ENCODE measurements at regions of chr2 and their contacts with region 1.

Region 1: GRCh38 chr2:29196792-29197788 is 81.9 kb downstream of the CLIP4 start:
- DNase-seq: peak; percentile 56 to 74 (median 67)
- ATAC-seq: peak; percentile 85 to 93 (median 92)
- H3K4me3 ChIP-seq: no peak overlapping the region
- H3K27ac ChIP-seq: no peak overlapping the region
- H3K4me1 ChIP-seq: no peaks in the 10 kb centered on the region
- H3K27me3 ChIP-seq: no peaks in the 10 kb centered on the region
- CTCF ChIP-seq: peak; percentile 78 to 85 (median 81)
- POLR2A ChIP-seq: no peak

Region 2: DNA sequence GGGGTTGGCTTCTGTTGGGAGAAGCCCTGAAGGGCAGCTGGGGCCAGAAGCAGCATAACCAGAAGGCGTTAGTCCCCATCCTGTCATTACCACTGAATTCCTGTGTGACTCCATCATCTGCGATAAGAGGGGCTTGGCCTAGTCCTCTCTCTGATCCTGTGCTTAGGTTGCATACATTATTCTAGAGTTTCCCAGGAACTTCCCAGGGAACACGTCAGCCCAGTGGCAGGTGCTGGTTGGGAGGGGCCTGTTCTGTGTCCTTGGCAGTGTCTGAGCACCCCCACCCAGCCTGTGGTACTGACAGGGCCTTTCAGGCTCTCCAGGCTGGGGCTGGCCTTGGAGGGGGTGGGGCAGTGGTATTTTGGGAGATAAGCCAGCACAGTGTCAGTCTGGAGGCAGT is 220.5 kb before region 1 on chr2:
- intact Hi-C with region 1: loop called in 1 of 2 experiments (anchors 10 kb)
- DNase-seq: no peak
- ATAC-seq: no peak
- H3K4me3 ChIP-seq: no peak overlapping the region
- H3K27ac ChIP-seq: no peak overlapping the region
- H3K4me1 ChIP-seq: no peaks in the 10 kb centered on the region
- H3K27me3 ChIP-seq: no peaks in the 10 kb centered on the region
- CTCF ChIP-seq: no peak
- POLR2A ChIP-seq: no peak

Measured in right lobe of liver (tissue), 6 donors.